ENCODE measurements at regions of chr22 and their contacts with region 1.

Region 1: GRCh38 chr22:50641696-50642607 is 14.0 kb upstream of the ARSA start:
- DNase-seq: no peak
- ATAC-seq: no peak
- H3K4me3 Mint-ChIP-seq: no peak overlapping the region
- H3K27ac Mint-ChIP-seq: no peak overlapping the region
- H3K4me1 Mint-ChIP-seq: no peaks in the 10 kb centered on the region
- H3K27me3 Mint-ChIP-seq: peaks cover 9% of the 10 kb centered on the region
- CTCF ChIP-seq: no peak

Region 2: GRCh38 chr22:50576070-50576469 is 65.9 kb before region 1 on chr22:
- CTCF ChIA-PET with region 1: no interaction called
- POLR2A ChIA-PET with region 1: no interaction called
- intact Hi-C with region 1: no loop called
- DNase-seq: no peak
- ATAC-seq: no peak
- H3K4me3 Mint-ChIP-seq: no peak overlapping the region
- H3K27ac Mint-ChIP-seq: no peak overlapping the region
- H3K4me1 Mint-ChIP-seq: peaks cover 9% of the 10 kb centered on the region
- H3K27me3 Mint-ChIP-seq: no peaks in the 10 kb centered on the region
- CTCF ChIP-seq: no peak

Region 3: GRCh38 chr22:50627642-50628542 is 14.1 kb before region 1 on chr22 and contains the start of gene ARSA:
- CTCF ChIA-PET with region 1: interaction called, 3 read pairs
- POLR2A ChIA-PET with region 1: interaction called, 17 read pairs
- intact Hi-C with region 1: loop called (anchors 1 kb)
- DNase-seq: peak; percentile 66
- ATAC-seq: peak; percentile 91
- H3K4me3 Mint-ChIP-seq: peak within 1 kb of the TSS; percentile 85
- H3K27ac Mint-ChIP-seq: peak within 1 kb of the TSS; percentile 60
- H3K4me1 Mint-ChIP-seq: peaks cover 14% of the 10 kb centered on the region
- H3K27me3 Mint-ChIP-seq: no peaks in the 10 kb centered on the region
- CTCF ChIP-seq: no peak
- total RNA-seq, gene ARSA: 49.0 and 50.9 TPM in 2 replicates

Measured in activated B cell treated with CpG ODN at 0.5 μM for 24 hours (primary cell).